GM10248 (cell line): ENCODE measurements at regions of chr5 and their contacts with region 1.

Region 1: DNA sequence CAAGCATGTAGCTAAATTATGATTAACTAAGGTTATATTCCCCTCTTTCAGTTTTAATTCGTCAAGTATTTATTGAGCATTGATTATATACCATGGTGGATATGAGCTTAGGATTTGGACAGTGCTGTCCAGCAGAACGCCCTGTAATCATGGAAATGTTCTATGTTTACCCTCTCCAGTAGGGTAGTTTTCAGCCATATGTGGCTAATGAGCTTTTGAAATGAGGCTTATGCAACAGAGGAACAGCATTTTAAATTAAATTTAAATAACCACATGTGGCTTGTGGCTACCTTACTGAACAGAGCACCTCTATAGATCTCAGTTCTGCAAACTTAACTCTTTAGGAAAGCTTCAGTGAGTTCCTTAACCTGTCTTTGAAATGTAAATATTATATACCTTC is 59.1 kb downstream of the JMY start:
- DNase-seq: no peak
- CTCF ChIP-seq: no peak

Region 2: GRCh38 chr5:79305706-79306105 is 10.7 kb after region 1 on chr5:
- CTCF ChIA-PET with region 1: interaction called, 16 read pairs
- POLR2A ChIA-PET with region 1: no interaction called
- DNase-seq: no peak
- CTCF ChIP-seq: no peak